Ascending aorta (tissue), 2 donors: ENCODE measurements at regions of chr18 and their contacts with region 1.

Region 1: GRCh38 chr18:74495581-74496507 is at the start of gene CNDP2:
- DNase-seq: peak; percentile 98 to 100
- H3K4me3 ChIP-seq: peak within 1 kb of the TSS; percentile 75 to 87
- H3K27ac ChIP-seq: peak within 1 kb of the TSS; percentile 88 to 97
- H3K4me1 ChIP-seq: peaks cover 0 to 9% of the 10 kb centered on the region in 2 donors
- H3K27me3 ChIP-seq: no peaks in the 10 kb centered on the region
- CTCF ChIP-seq: no peak
- total RNA-seq, gene CNDP2: 33.5 TPM

Region 2: GRCh38 chr18:74196220-74197119 is 299.4 kb before region 1 on chr18:
- intact Hi-C with region 1: loop called (anchors 5 kb)
- DNase-seq: peak in 1 of 2 donors; percentile 64
- H3K4me3 ChIP-seq: no peak overlapping the region
- H3K27ac ChIP-seq: no peak overlapping the region
- H3K4me1 ChIP-seq: no peaks in the 10 kb centered on the region
- H3K27me3 ChIP-seq: no peaks in the 10 kb centered on the region
- CTCF ChIP-seq: peak; percentile 70 to 86 (median 70)

Region 3: GRCh38 chr18:74353169-74353775 is 142.6 kb before region 1 on chr18:
- intact Hi-C with region 1: loop called (anchors 1 kb)
- DNase-seq: peak in 1 of 2 donors; percentile 85
- H3K4me3 ChIP-seq: no peak overlapping the region
- H3K27ac ChIP-seq: peak overlapping the region; percentile 8 to 35
- H3K4me1 ChIP-seq: peaks cover 0 to 3% of the 10 kb centered on the region in 2 donors
- H3K27me3 ChIP-seq: no peaks in the 10 kb centered on the region
- CTCF ChIP-seq: peak; percentile 59 to 77 (median 60)

Region 4: DNA sequence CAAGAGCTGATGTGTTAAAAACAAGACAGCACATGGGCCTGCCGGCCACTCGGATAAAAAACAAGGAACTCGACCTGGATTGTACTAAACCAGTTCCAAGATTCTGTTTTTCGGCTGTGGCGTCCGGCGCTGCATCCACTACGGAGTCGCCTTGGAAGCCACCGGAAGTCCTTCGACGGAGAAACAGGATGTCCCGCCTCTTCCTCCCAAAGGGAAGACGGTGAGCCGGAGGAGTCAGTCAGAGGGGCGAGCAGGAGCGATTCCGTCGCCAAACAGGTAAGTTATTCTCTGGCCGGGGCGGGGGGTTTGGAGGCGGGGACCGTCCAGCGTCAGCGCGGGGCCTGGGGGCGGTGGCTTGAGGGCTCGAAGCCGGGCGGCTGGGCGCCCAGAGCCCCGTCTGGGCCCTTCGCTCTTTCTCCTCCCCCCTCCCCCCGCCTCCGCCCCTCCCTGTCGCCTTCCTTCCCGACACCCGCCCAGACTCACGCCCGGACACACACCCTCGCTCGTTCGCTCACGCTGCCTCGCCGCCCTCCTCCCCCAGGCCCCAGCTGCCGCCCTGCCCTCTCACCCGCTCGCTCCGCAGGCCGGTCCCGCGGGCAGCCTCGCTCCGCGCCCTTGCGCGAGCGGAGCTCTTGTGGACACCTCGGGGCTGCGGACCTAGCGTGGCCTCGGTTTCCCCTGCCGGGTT is 102.0 kb after region 1 on chr18 and contains the start of gene ZNF407:
- intact Hi-C with region 1: loop called (anchors 1 kb)
- DNase-seq: peak; percentile 34 to 89
- H3K4me3 ChIP-seq: peak within 1 kb of the TSS; percentile 84 to 89
- H3K27ac ChIP-seq: peak within 1 kb of the TSS; percentile 99
- H3K4me1 ChIP-seq: peaks cover 0 to 17% of the 10 kb centered on the region in 2 donors
- H3K27me3 ChIP-seq: no peaks in the 10 kb centered on the region
- CTCF ChIP-seq: peak in 1 of 3 experiments; percentile 16
- total RNA-seq, gene ZNF407: 8.7 TPM

Region 5: DNA sequence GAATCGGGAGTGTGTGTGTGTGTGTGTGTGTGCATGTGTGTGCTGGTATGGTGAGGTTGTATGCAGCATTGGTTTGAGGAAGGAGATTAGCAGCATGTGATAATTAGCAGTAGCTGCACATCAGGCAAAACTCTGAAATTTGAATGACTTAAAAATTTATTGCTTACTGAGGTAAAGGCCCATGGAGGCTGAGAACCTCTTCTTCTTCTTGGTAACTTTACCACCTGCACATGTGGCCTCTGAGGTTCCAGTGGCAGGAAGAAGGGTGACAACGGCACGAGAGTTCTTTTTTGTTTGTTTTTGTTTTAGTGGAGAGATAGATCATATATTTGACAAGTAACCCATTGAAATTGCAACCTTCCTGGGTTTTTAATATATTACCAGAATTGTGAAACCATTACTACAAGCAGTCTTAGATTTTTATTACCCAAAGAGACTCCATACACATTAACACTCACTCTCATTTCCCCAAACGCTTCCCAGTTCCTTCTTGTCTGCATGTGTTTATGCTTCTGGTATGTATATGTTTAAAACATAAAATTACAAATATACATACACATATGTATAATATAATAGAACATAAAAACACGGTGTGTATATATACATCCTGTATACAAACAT is 421.0 kb after region 1 on chr18:
- intact Hi-C with region 1: no loop called
- DNase-seq: no peak
- H3K4me3 ChIP-seq: no peak overlapping the region
- H3K27ac ChIP-seq: no peak overlapping the region
- H3K4me1 ChIP-seq: no peaks in the 10 kb centered on the region
- H3K27me3 ChIP-seq: no peaks in the 10 kb centered on the region
- CTCF ChIP-seq: no peak

Region 6: GRCh38 chr18:76492669-76493212 is 1996.9 kb after region 1 on chr18:
- intact Hi-C with region 1: loop called (anchors 10 kb)
- DNase-seq: peak; percentile 95 to 99
- H3K4me3 ChIP-seq: peak overlapping the region; percentile 67 to 78
- H3K27ac ChIP-seq: peak overlapping the region; percentile 67 to 72
- H3K4me1 ChIP-seq: peaks cover 6 to 7% of the 10 kb centered on the region in 2 donors
- H3K27me3 ChIP-seq: no peaks in the 10 kb centered on the region
- CTCF ChIP-seq: no peak